Activated naive CD4-positive, alpha-beta T cell treated with anti-CD3 and anti-CD28 coated beads for 36 hours (primary cell): ENCODE measurements at regions of chr2 and their contacts with region 1.

Region 1: DNA sequence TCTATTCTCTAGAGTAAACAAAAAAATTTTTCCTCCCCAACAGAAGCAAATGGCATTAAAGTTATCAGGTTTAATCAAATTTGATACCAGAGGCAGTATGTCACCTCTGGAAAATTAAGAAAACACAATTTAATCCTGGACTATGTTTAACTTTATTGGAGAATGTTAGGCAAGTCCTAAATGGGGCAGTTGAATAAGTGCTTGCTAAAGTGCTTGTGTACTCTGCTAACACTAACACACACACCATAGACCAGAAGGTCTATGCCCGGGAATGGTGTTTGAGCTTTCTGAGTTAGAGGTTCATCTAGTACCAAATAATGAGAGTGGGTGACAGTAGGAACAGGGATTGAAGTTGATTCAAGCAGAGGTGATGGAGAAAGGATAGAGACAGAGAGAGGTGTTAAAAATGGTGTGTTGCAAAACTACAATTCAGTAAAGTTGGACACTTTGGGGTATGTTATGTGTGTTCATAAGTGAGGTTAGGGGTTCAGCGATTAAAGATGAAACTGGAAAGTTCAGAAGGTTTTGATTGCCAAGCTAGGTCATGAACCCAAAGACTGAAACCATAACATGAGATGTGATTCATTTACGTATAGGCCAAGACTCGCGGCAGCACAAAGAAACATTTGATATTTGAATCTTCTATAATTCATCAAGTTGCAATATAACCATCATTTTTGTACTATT is 40.5 kb upstream of the PEX13 start:
- DNase-seq: peak; percentile 48
- H3K4me3 Mint-ChIP-seq: no peak overlapping the region
- H3K27ac Mint-ChIP-seq: peak overlapping the region; percentile 69
- H3K4me1 Mint-ChIP-seq: peaks cover 53% of the 10 kb centered on the region
- H3K27me3 Mint-ChIP-seq: no peaks in the 10 kb centered on the region

Region 2: DNA sequence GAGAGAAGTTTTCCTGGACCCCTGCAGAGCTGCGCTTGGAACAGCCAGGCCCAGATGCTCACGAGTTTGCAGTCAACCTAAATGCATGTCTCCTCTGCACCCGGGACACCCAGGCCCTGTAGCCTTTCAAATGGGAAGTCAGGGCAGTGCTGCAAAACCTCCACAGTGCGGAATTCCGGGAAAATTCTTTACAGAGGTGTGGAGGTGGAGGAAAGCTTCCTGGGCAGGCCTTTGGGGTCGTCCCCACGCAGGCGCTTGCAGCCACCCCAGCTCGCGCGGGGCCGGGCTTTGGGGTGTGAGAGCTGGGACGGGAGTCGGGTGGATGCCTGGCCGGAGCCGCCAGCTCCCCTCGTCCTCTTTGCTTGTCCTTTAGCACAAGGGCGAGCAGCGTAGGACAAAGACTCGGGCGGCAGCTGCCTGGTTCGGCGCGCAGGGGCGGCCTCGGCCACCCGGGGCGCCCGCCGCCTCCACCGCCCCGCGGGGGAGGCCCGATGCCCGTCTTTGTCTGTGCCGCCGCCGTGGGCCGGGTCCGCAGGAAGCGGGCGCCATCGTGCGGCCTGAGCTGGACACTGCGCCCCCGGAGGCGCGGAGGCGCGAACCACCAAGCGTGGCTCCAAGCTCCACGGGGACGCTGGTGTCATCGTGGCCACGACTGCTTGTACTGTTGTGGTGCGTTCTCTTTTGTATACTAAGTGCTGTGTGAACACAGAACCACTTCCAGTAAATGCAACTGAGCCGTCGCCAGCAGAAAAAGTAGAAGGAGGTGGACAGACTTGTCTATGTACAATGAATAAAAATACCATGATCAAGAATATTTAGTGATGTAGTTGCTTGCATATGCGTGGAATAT is 395.4 kb before region 1 on chr2:
- CTCF ChIA-PET with region 1: no interaction called
- intact Hi-C with region 1: no loop called
- DNase-seq: peak; percentile 72
- H3K4me3 Mint-ChIP-seq: no peak overlapping the region
- H3K27ac Mint-ChIP-seq: no peak overlapping the region
- H3K4me1 Mint-ChIP-seq: peaks cover 2% of the 10 kb centered on the region
- H3K27me3 Mint-ChIP-seq: peaks cover 28% of the 10 kb centered on the region

Region 3: DNA sequence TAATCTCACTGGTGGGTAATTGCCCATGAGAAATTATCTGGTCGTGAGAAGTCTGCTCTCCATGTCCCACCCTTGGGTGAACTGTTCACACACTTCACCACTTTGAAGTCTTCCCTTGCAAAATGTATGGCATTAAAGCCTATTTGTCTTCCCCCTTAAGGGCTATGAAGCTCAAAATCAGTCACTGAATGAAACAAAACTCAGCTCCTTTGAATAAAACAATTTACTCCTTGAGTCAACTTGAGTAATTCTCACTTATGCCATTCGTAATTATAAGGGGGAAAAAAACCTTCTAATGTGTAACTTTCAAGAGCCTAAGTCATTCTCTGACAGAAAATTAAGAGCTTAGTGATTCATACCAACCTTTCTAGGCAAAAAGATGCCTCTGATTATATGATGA is 144.4 kb before region 1 on chr2:
- CTCF ChIA-PET with region 1: no interaction called
- intact Hi-C with region 1: loop called (anchors 1 kb)
- DNase-seq: no peak
- H3K4me3 Mint-ChIP-seq: no peak overlapping the region
- H3K27ac Mint-ChIP-seq: peak overlapping the region; percentile 15
- H3K4me1 Mint-ChIP-seq: peaks cover 42% of the 10 kb centered on the region
- H3K27me3 Mint-ChIP-seq: no peaks in the 10 kb centered on the region

Region 4: DNA sequence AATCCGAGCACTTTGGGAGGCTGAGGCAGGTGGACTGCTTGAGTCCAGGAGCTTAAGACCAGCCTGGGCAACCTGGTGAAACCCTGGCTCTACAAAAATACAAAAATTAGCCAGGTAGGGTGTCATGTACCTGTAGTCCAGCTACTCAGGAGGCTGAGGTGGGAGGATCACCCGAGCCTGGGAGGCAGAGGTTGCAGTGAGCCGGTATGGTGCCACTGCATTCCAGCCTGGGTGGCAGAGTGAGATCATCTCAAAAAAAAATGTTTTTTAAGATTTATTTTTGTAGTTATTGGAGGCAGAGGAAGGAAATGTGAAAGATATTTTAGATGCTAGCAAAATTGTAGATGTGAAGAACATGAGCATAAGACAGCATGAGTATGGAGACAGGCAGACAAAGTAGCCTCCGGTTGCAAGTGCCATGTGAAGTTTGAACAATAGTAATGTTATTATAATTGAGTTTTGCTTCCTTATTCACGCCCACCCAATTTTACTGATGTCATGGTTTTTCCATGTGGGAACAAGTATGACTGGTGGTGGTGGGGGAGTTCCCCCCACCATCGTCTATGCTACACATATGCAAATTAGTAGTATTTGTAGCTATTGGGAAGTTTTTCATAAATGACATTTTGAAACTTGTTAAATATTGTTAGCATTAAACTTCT is 77.7 kb before region 1 on chr2:
- CTCF ChIA-PET with region 1: no interaction called
- intact Hi-C with region 1: loop called (anchors 1 kb)
- DNase-seq: peak; percentile 77
- H3K4me3 Mint-ChIP-seq: peak overlapping the region; percentile 24
- H3K27ac Mint-ChIP-seq: peak overlapping the region; percentile 90
- H3K4me1 Mint-ChIP-seq: peaks cover 51% of the 10 kb centered on the region
- H3K27me3 Mint-ChIP-seq: no peaks in the 10 kb centered on the region

Region 5: DNA sequence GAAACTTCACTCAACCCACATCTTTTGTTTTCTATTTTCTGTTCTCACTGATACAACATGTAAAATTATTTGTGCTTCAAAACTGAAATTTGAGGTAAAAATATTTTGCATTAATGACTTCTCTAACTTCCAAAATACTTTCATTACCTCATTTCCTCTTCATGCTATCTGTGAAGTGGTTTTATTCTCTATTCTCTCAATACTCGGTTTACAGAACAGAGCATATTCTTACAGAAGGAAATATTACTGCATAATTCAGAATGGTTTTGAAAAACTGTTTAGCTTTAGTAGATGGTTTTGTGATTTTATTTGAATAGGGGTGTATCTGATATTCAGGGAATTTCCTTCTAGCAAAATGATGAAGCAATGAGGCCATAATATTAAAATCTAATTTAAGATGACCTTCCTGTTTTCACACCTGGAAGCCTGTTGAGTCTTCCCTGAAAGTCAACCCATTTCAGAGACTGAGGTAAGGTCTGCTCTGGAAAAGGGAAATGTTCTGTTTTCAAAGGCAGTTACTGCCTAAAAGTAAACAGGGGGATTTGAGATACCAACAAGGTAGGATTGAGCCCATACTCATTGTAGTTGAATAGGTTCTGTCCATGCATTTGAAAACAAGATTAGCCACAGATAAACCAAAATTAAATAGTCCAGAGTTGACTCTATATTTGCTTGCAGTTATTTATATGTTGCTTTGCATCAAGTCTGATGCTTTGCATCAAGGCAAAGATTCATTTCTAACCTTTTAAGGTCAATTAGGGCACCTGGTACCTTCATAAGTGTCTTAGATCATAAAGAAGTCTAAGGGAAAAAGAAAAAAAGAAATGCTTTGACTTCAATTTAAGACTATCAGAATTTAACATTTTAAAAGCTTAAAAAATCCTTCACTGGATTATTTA is 10.3 kb before region 1 on chr2:
- CTCF ChIA-PET with region 1: no interaction called
- intact Hi-C with region 1: no loop called
- DNase-seq: no peak
- H3K4me3 Mint-ChIP-seq: peak overlapping the region; percentile 11
- H3K27ac Mint-ChIP-seq: peak overlapping the region; percentile 62
- H3K4me1 Mint-ChIP-seq: peaks cover 62% of the 10 kb centered on the region
- H3K27me3 Mint-ChIP-seq: no peaks in the 10 kb centered on the region

Region 6: DNA sequence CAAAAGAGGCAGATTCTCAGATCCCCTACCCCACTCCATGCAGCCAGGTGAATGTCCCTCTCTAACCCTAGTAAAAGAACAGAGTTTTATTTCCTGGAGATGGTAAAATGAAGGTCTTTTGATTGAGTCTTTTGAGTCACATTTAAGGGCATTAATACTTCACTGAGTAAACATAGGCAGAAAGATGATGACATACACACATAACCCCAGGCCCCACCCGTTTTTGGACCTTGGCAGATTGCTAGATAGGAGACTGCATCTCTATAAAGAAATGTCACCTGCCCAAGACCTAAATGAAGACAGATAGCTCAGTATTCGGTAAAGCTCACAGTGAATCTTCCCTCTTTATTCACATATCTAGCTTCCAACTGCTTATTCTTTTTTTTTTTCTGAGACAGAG is 12.2 kb after region 1 on chr2:
- CTCF ChIA-PET with region 1: no interaction called
- intact Hi-C with region 1: no loop called
- DNase-seq: no peak
- H3K4me3 Mint-ChIP-seq: no peak overlapping the region
- H3K27ac Mint-ChIP-seq: no peak overlapping the region
- H3K4me1 Mint-ChIP-seq: peaks cover 5% of the 10 kb centered on the region
- H3K27me3 Mint-ChIP-seq: no peaks in the 10 kb centered on the region

Region 7: GRCh38 chr2:62195421-62196277 is 1218.6 kb after region 1 on chr2 and contains the start of gene B3GNT2:
- CTCF ChIA-PET with region 1: no interaction called
- intact Hi-C with region 1: loop called (anchors 5 kb)
- DNase-seq: peak; percentile 85
- H3K4me3 Mint-ChIP-seq: peak within 1 kb of the TSS; percentile 88
- H3K27ac Mint-ChIP-seq: peak within 1 kb of the TSS; percentile 91
- H3K4me1 Mint-ChIP-seq: peaks cover 22% of the 10 kb centered on the region
- H3K27me3 Mint-ChIP-seq: peaks cover 2% of the 10 kb centered on the region
- total RNA-seq, gene B3GNT2: 31.2 to 33.0 TPM